ENCODE measurements at regions of chr11 and their contacts with region 1.

Region 1: DNA sequence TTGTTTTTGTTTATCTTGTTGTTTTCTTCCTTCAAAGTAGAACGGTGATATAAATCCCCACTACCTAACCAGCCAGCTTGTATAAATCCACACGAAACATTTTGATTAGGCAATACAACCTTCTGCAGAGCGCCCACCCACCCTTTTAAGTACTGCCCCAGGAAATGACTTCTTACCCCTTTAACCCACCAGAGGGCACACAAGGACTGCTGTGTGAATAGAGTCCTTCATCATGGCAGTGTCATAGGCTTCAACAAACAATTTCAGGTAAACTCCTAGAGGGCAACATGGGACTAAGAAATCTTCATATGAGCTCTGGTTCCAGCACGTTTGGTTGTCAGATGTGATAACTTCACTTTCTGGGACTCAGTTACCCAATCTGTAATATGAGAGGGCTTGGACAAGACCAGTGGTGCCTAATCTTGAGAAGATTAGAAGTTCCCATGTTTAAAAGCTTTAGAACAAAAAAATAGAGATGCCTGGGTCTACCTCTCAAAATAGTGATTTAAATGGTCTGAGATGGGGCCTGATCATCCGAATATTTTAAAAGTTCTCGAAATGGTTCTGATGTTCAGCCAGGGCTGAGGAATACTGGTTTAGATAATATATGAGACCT is 56.1 kb downstream of the PIWIL4 start:
- DNase-seq: peak in 3 of 10 donors; percentile 17 to 36 (median 20)

Region 2: GRCh38 chr11:94493281-94494125 is 129.7 kb before region 1 on chr11 and contains the starts of genes ANKRD49 and MRE11:
- intact Hi-C with region 1: no loop called
- DNase-seq: peak; percentile 93 to 99 (median 97)

Region 3: GRCh38 chr11:94897330-94897768 is 274.1 kb after region 1 on chr11:
- intact Hi-C with region 1: loop called (anchors 2 kb)
- DNase-seq: peak in 7 of 10 donors; percentile 36 to 85 (median 57)

Region 4: GRCh38 chr11:94973099-94973968 is 350.1 kb after region 1 on chr11 and contains the starts of genes CWC15 and KDM4D:
- intact Hi-C with region 1: loop called (anchors 10 kb)
- DNase-seq: peak; percentile 92 to 99 (median 96)

Region 5: GRCh38 chr11:95067039-95067840 is 444.0 kb after region 1 on chr11:
- intact Hi-C with region 1: loop called (anchors 5 kb)
- DNase-seq: peak; percentile 73 to 97 (median 84)

Measured in posterior cingulate gyrus (tissue), 11 donors.